Activated CD4-positive, alpha-beta memory T cell treated with anti-CD3 and anti-CD28 coated beads for 36 hours (primary cell): ENCODE measurements at regions of chr1 and their contacts with region 1.

Region 1: GRCh38 chr1:226736908-226737818 is 1.9 kb downstream of the ITPKB start:
- DNase-seq: peak; percentile 71
- H3K4me3 Mint-ChIP-seq: peak overlapping the region; percentile 89
- H3K27ac Mint-ChIP-seq: peak overlapping the region; percentile 94
- H3K4me1 Mint-ChIP-seq: peaks cover 45% of the 10 kb centered on the region
- H3K27me3 Mint-ChIP-seq: no peaks in the 10 kb centered on the region

Region 2: DNA sequence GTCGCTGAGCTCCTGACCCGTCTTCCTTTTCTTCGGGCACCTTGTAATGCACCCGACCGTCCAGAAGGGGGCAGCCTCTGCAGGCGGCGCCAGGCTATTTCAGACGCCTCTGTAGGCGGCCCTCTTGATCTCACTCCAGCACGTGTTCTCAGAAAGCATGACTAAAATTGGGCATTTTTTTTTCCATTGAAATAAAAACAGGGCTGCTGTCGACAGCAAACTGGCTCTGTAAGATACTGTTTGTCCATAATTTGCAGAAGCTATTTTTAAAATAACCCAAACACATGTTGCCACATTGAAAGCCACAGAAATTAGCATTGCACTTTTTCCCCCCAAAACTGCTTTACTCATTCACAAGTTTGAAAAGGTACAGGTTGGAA is 110.6 kb before region 1 on chr1:
- CTCF ChIA-PET with region 1: interaction called, 10 read pairs
- POLR2A ChIA-PET with region 1: no interaction called
- intact Hi-C with region 1: loop called (anchors 1 kb)
- DNase-seq: peak; percentile 92
- H3K4me3 Mint-ChIP-seq: peak overlapping the region; percentile 38
- H3K27ac Mint-ChIP-seq: peak overlapping the region; percentile 76
- H3K4me1 Mint-ChIP-seq: peaks cover 25% of the 10 kb centered on the region
- H3K27me3 Mint-ChIP-seq: peaks cover 1% of the 10 kb centered on the region

Region 3: DNA sequence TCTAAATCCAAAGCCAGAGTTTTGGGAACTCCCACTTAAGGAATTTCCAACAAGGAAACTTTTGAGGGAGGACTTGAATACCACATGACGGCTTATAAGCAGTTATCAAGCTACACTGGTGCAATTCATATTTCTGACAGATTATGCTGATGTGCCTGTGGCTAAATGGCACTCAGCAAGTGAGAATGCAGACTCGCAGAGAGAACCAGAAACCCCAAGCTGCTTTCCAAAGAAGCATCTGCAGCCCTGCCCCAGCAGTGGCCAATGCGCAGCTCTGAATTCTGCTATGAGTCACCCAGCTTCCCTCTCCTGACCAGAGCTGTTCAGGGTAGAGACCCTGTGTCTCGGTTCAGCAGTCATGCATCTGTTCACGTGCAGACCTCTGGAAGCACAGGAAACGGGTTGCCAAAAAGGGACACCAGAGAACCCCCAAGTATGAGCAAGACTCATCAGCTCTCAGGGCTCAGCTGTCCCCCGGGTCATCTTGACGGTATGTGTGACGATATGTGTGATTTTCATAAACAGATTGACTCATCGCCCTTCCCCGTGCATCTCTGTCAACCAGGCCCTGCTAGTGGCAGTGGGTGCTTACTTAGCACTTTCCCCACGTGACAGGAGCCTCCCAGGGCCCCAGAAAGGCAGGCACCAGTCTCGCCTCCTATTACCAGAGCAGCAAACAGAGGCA is 74.4 kb before region 1 on chr1:
- CTCF ChIA-PET with region 1: interaction called, 3 read pairs
- POLR2A ChIA-PET with region 1: interaction called, 5 read pairs
- intact Hi-C with region 1: loop called (anchors 1 kb)
- DNase-seq: peak; percentile 94
- H3K4me3 Mint-ChIP-seq: peak overlapping the region; percentile 58
- H3K27ac Mint-ChIP-seq: no peak overlapping the region
- H3K4me1 Mint-ChIP-seq: peaks cover 90% of the 10 kb centered on the region
- H3K27me3 Mint-ChIP-seq: no peaks in the 10 kb centered on the region

Region 4: GRCh38 chr1:226711976-226712741 is 25.0 kb before region 1 on chr1:
- CTCF ChIA-PET with region 1: interaction called, 21 read pairs
- POLR2A ChIA-PET with region 1: interaction called, 10 read pairs
- intact Hi-C with region 1: loop called (anchors 1 kb)
- DNase-seq: peak; percentile 81
- H3K4me3 Mint-ChIP-seq: peak overlapping the region; percentile 57
- H3K27ac Mint-ChIP-seq: peak overlapping the region; percentile 85
- H3K4me1 Mint-ChIP-seq: peaks cover 94% of the 10 kb centered on the region
- H3K27me3 Mint-ChIP-seq: no peaks in the 10 kb centered on the region

Region 5: DNA sequence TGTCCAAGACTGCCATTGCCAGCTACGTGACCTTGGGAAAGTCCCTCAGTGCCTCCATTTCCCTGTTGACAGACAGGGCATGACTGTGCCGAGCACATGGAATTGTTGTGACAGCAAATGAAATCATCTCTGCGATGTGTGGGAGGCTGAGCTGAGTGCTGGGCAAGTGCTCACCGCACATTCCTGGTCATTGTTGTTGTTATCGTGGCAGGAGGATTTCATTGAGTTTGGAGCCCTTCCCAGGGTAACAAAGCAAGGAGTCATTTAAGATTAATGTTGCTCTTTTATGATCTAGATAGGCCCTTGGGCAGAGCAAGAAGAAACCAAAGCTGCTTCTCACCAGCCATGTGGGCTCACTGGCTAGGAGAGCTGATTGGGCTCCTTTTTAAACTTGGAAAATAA is 41.5 kb after region 1 on chr1:
- CTCF ChIA-PET with region 1: no interaction called
- POLR2A ChIA-PET with region 1: no interaction called
- intact Hi-C with region 1: no loop called
- DNase-seq: no peak
- H3K4me3 Mint-ChIP-seq: no peak overlapping the region
- H3K27ac Mint-ChIP-seq: no peak overlapping the region
- H3K4me1 Mint-ChIP-seq: no peaks in the 10 kb centered on the region
- H3K27me3 Mint-ChIP-seq: no peaks in the 10 kb centered on the region

Region 6: GRCh38 chr1:226827968-226828513 is 90.9 kb after region 1 on chr1:
- CTCF ChIA-PET with region 1: interaction called, 7 read pairs
- POLR2A ChIA-PET with region 1: interaction called, 4 read pairs
- intact Hi-C with region 1: loop called (anchors 1 kb)
- DNase-seq: peak; percentile 98
- H3K4me3 Mint-ChIP-seq: peak overlapping the region; percentile 52
- H3K27ac Mint-ChIP-seq: peak overlapping the region; percentile 88
- H3K4me1 Mint-ChIP-seq: peaks cover 28% of the 10 kb centered on the region
- H3K27me3 Mint-ChIP-seq: no peaks in the 10 kb centered on the region

Region 7: DNA sequence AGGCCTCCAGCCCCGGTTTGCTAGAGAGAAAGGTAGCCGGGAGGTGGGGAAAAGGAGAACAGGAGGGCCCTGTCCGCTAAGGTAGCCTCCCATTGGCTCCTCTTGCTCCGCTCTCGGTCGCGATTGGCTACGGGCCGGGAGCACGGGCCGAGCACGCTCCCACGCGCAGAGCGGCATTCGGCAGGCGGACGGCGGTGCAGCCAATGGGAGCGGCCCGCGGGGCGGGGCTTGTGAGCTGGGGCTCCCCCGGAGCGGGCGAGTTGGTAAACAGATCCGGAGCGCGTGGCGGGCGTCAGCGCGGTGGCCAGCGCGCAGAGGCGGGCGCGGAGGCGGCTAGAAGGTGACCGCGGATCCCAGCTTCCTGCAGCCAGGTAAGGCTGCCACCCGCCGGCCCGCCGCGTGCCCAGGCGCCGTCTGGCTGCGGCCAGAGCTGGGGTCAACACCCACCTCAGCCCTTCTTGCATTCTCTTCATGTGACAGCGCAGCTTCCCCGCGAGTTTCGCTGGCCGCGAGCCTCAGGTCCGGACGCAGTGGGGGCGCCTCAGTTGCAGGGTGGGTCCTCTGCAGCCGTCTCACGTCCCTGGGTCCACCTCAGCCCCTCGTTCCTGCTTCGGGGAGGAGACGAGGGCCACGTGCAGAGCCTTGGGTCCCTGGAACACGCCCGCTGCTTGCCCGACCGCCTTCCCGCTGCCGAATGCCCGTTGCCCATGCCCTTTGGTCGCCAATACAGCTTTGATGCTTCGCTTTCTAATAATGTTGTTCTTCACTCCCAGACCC is 203.1 kb after region 1 on chr1 and contains the start of gene COQ8A:
- CTCF ChIA-PET with region 1: no interaction called
- POLR2A ChIA-PET with region 1: no interaction called
- intact Hi-C with region 1: loop called (anchors 10 kb)
- DNase-seq: peak; percentile 99
- H3K4me3 Mint-ChIP-seq: peak within 1 kb of the TSS; percentile 82
- H3K27ac Mint-ChIP-seq: peak within 1 kb of the TSS; percentile 94
- H3K4me1 Mint-ChIP-seq: peaks cover 41% of the 10 kb centered on the region
- H3K27me3 Mint-ChIP-seq: no peaks in the 10 kb centered on the region
- total RNA-seq, gene COQ8A: 19.8 to 22.2 TPM